Right ventricle myocardium inferior (tissue), 1 donor: ENCODE measurements at regions of chr2 and their contacts with region 1.

Region 1: DNA sequence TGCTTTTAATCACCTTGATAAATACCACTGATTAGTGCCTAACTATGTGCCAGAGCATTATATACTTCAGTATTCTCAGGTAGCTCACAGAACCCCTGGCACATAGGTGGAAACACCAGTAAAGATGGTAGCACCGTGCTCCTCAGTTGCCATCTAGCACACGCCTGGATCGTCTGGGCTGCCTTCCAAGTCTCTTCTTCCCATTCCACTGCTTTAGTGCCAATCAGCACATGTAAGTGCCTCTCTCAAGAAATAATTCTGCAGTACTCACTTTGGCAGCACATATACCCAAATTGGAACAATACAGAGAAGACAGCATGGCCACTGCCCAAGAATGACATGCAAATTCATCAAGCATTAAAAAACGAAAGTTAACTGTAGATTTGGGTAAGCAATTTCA is 13.0 kb downstream of the POLR2D start:
- DNase-seq: no peak
- ATAC-seq: peak; percentile 85

Region 2: DNA sequence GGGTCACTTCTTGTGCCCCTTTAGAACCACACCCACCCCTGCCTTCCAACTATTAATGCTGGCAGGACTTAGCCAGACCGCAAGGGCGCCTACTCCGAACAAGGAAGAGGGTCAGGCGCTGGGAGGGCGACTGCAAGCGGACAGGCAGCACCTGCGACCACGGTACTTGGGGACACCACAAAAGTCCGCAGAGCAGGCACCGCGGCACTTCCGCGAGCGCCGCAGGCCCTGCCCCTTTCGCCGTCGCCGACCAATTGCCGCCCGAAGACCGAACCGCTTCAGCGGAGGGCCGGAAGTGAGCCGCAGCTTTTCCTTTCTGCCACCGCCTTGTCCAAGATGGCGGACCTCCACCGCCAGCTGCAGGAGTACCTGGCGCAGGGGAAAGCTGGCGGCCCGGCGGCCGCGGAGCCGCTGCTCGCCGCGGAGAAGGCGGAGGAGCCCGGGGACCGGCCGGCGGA is 143.8 kb before region 1 on chr2 and contains the start of gene SFT2D3:
- intact Hi-C with region 1: loop called (anchors 10 kb)
- DNase-seq: peak; percentile 96
- ATAC-seq: peak; percentile 92
- total RNA-seq, gene SFT2D3: 3.1 TPM